Psoas muscle (tissue), 8 donors: ENCODE measurements at regions of chr1 and their contacts with region 1.

Region 1: GRCh38 chr1:108125312-108126138 is 74.6 kb downstream of the SLC25A24 start:
- DNase-seq: peak; percentile 32 to 60
- ATAC-seq: peak; percentile 83 to 95 (median 91)
- H3K4me3 ChIP-seq: no peak overlapping the region
- H3K27ac ChIP-seq: no peak overlapping the region
- H3K4me1 ChIP-seq: no peaks in the 10 kb centered on the region
- H3K27me3 ChIP-seq: no peaks in the 10 kb centered on the region
- CTCF ChIP-seq: peak; percentile 90

Region 2: GRCh38 chr1:107782217-107782845 is 343.2 kb before region 1 on chr1:
- intact Hi-C with region 1: loop called (anchors 1 to 2 kb)
- DNase-seq: no peak
- ATAC-seq: peak in 1 of 4 donors; percentile 68
- H3K4me3 ChIP-seq: no peak overlapping the region
- H3K27ac ChIP-seq: no peak overlapping the region
- H3K4me1 ChIP-seq: no peaks in the 10 kb centered on the region
- H3K27me3 ChIP-seq: no peaks in the 10 kb centered on the region
- CTCF ChIP-seq: peak; percentile 77

Region 3: GRCh38 chr1:107963601-107964335 is 161.8 kb before region 1 on chr1:
- intact Hi-C with region 1: loop called in 1 of 2 experiments (anchors 10 kb)
- DNase-seq: peak; percentile 13 to 48
- ATAC-seq: peak in 1 of 4 donors; percentile 13
- H3K4me3 ChIP-seq: peak overlapping the region; percentile 62
- H3K27ac ChIP-seq: no peak overlapping the region
- H3K4me1 ChIP-seq: no peaks in the 10 kb centered on the region
- H3K27me3 ChIP-seq: peaks cover 0 to 28% (median 11%) of the 10 kb centered on the region in 3 donors
- CTCF ChIP-seq: no peak

Region 4: GRCh38 chr1:109181105-109181806 is 1055.7 kb after region 1 on chr1:
- intact Hi-C with region 1: no loop called
- DNase-seq: no peak
- ATAC-seq: no peak
- H3K4me3 ChIP-seq: no peak overlapping the region
- H3K27ac ChIP-seq: no peak overlapping the region
- H3K4me1 ChIP-seq: no peaks in the 10 kb centered on the region
- H3K27me3 ChIP-seq: no peaks in the 10 kb centered on the region
- CTCF ChIP-seq: no peak